ENCODE measurements at regions of chr19 and their contacts with region 1.

Region 1: DNA sequence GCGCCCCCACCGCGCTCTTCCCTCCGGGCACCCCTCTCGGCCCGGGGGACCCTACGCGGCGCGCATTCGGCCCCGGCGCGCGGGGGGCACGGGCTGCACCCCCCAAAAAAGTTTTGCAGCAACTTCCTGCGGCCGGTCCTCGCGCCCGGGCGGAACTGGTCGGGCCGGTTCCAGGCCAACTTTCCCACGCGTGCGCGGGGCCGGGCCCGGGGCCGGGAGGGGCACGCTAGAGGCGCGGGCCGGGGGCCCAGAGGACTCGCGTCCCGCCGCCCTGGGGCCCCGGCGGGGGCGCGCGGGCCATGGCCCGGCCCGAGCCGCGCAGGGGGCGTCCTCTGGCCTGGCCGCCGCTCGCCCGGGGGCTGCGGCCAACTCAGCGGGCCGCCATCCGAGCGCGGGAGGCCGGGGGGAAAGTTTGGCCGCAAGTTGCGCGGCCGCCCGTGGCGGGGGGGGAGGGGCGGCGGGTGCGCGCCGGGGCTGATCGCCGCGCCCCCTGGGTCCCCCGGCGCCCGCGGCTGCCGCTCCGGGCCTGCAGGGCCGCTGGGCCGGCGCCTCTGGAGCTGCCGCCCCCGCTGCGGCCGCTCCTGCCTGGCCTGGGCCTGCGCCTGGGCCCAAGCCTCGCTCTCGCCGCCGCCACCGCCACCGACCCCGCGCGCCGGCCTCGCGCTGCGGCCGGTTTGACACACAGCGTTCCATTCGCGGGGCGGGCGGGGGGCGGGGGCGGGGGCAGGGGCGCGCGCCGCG is at the start of gene NR2F6:
- DNase-seq: peak in 1 of 2 experiments; percentile 61
- H3K4me3 ChIP-seq: peak within 1 kb of the TSS; percentile 78
- H3K4me3 Mint-ChIP-seq: peak within 1 kb of the TSS; percentile 94
- H3K27ac Mint-ChIP-seq: peak within 1 kb of the TSS; percentile 92
- H3K4me1 ChIP-seq: peaks cover 63% of the 10 kb centered on the region
- H3K4me1 Mint-ChIP-seq: peaks cover 30% of the 10 kb centered on the region
- H3K27me3 ChIP-seq: no peaks in the 10 kb centered on the region
- H3K27me3 Mint-ChIP-seq: no peaks in the 10 kb centered on the region
- CTCF ChIP-seq: no peak
- total RNA-seq, gene NR2F6: 94.4 and 96.5 TPM in 2 replicates

Region 2: GRCh38 chr19:17260842-17261325 is 15.5 kb after region 1 on chr19:
- CTCF ChIA-PET with region 1: interaction called, 3 read pairs
- POLR2A ChIA-PET with region 1: interaction called, 3 read pairs
- intact Hi-C with region 1: loop called (anchors 2 kb)
- DNase-seq: peak; percentile 90 to 91
- H3K4me3 ChIP-seq: no peak overlapping the region
- H3K4me3 Mint-ChIP-seq: no peak overlapping the region
- H3K27ac Mint-ChIP-seq: peak overlapping the region; percentile 2
- H3K4me1 ChIP-seq: no peaks in the 10 kb centered on the region
- H3K4me1 Mint-ChIP-seq: peaks cover 8% of the 10 kb centered on the region
- H3K27me3 ChIP-seq: no peaks in the 10 kb centered on the region
- H3K27me3 Mint-ChIP-seq: no peaks in the 10 kb centered on the region
- CTCF ChIP-seq: peak; percentile 87 to 94

Measured in Caco-2 (cell line).